Left cardiac atrium (tissue), 4 donors: ENCODE measurements at regions of chr17 and their contacts with region 1.

Region 1: DNA sequence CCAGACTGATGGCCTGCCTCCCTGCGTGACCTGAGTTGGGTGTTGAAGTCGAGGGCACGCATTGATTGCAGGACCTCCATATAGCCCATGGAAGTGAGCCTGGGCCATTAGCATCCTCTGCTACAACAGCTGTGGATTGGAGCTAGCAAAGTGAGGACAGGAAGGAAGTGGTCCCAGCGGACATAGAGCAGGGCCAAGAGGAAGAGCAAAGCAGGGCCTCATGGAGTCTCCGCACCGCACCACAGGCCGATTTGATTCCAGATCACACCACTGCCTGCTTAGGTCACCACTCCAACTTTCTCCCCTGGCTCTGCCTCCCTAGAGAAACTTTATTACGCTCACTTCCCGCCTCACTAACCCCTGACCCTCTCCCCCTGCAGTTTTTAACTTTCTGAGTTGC is 10.7 kb upstream of the UBTF start:
- DNase-seq: no peak
- ATAC-seq: peak in 1 of 2 donors; percentile 44

Region 2: DNA sequence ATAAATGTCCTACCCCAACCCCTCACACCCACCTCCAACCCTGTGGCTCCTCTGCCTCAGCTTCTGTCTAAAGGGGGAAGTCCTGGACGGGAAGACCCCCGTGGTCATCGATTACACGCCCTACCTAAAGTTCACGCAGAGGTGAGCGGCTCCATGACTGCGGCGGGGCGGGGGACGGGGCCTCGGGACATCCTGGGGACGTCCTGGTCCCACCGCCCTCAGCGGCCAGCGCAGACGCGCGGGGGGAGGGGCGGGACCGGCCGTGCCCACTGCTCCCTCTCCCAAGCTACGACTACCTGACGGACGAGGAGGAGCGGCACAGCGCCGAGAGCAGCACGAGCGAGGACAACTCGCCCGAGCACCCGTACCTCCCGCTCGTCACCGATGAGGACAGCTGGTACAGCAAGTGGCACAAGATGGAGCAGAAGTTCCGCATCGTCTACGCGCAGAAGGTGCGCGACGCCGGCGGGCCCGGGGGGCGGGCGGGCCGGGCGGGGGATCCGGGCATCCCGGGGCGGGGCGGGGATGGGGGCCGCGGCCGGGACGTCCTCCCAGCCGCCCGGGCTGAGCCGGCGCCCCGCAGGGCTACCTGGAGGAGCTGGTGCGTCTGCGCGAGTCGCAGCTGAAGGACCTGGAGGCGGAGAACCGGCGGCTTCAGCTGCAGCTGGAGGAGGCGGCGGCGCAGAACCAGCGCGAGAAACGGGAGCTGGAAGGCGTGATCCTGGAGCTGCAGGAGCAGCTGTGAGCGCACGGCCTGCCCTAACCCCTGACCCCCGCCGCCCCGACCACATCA is 84.9 kb after region 1 on chr17:
- intact Hi-C with region 1: loop called in 1 of 2 experiments (anchors 5 kb)
- DNase-seq: no peak
- ATAC-seq: peak in 1 of 2 donors; percentile 14